ENCODE measurements at regions of chr6 and their contacts with region 1.

Region 1: DNA sequence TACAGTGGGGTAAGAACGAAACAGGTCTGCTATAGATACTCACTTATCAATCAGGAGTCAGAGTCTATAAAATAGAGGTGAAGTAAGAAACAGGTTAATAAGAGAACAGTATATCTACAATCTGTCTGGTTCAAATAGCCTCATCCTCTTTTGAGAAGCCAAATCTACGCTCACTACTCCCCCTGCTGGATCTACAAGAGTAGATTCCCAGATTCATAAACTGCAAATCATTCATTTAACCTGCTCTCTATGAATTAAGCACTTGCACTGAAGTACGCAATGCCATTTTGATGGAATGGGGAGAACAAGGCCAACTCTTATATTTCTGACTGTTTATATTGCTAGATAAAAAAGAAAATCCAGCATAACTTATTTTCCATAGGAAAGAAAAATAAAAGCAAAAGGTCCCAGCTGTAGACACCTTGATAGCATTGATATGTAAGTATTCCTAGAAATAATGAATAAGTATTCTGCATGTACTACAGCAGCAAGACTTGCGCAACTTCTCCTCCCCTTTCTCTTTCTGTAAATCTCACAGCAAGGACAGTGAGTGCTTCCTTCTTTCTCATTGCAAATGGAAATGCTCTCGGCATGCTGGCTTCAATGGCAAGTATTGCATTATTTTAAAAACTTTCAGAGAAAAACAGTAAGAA is 92.3 kb downstream of the RFX6 start:
- DNase-seq: peak; percentile 64
- ATAC-seq: peak; percentile 89
- H3K4me3 ChIP-seq: no peak overlapping the region
- H3K27ac ChIP-seq: no peak overlapping the region
- H3K4me1 ChIP-seq: no peaks in the 10 kb centered on the region
- H3K27me3 ChIP-seq: no peaks in the 10 kb centered on the region
- CTCF ChIP-seq: peak; percentile 84
- EP300 ChIP-seq: no peak
- POLR2A ChIP-seq: no peak
- RAD21 ChIP-seq: peak; percentile 61

Region 2: DNA sequence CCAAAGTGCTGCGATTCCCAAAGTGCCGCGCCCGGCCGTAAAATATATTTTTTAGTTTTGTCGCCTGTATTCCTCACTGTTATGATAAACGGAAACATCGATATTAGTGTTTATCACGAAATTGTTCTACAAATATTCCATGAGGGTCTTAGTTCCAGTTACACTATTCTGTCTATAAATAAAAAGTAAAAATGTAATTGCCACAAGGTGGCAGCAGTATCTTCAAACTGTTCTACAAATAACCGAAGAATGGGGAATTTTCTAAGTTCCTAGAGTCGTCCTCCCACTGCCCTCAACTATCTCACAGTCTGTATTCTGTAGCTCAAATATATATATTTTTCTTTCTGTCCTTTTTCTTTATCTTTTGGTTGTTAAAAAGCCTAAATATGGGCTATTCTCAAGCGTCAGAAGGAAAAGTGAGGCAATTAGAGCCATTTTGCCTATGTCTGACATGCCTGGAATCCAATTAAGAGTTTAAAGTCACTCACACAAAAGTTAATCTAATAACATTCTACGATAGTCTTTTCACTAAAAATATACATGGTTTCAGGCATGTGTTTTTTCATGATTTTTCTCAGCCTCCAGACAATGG is 189.7 kb before region 1 on chr6:
- CTCF ChIA-PET with region 1: interaction called, 8 read pairs
- POLR2A ChIA-PET with region 1: no interaction called
- in situ Hi-C with region 1: no loop called
- intact Hi-C with region 1: loop called (anchors 1 kb)
- DNase-seq: peak; percentile 58
- ATAC-seq: peak; percentile 86
- H3K4me3 ChIP-seq: peak overlapping the region in 1 of 3 experiments; percentile 1; a peak in 1 of 6 replicates
- H3K27ac ChIP-seq: no peak overlapping the region
- H3K4me1 ChIP-seq: no peaks in the 10 kb centered on the region
- H3K27me3 ChIP-seq: no peaks in the 10 kb centered on the region; a peak in 1 of 5 replicates
- CTCF ChIP-seq: peak; percentile 72
- EP300 ChIP-seq: no peak
- POLR2A ChIP-seq: no peak
- RAD21 ChIP-seq: no peak

Region 3: DNA sequence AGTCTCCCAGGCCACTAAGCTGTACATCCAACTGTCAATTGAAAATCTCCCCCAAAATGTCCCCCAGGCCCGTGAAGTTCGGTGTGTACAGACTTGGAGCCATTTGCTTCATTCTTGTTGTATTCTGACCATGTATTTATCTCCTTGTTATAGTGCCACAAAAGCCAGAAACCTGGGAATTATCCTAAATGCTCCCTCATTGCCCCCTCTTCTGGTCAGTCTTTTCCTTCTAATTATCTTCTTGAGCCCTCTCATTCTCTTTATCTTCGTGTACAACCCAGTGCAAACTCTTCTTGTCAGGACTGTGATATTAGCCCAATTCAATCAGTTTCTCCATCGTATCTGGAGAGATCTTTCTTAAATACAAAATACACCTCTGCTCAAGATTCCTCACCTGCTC is 27.6 kb before region 1 on chr6:
- CTCF ChIA-PET with region 1: no interaction called
- POLR2A ChIA-PET with region 1: no interaction called
- in situ Hi-C with region 1: no loop called
- intact Hi-C with region 1: loop called (anchors 2 kb)
- DNase-seq: no peak
- ATAC-seq: peak; percentile 39; the same call in 2 of the 3 replicates
- H3K4me3 ChIP-seq: no peak overlapping the region
- H3K27ac ChIP-seq: no peak overlapping the region
- H3K4me1 ChIP-seq: peaks cover 17% of the 10 kb centered on the region
- H3K27me3 ChIP-seq: no peaks in the 10 kb centered on the region; a peak in 1 of 5 replicates
- CTCF ChIP-seq: 0 out of 2 replicates have a peak, but pooled peaks have one; percentile 12
- EP300 ChIP-seq: no peak
- POLR2A ChIP-seq: no peak
- RAD21 ChIP-seq: no peak

Region 4: DNA sequence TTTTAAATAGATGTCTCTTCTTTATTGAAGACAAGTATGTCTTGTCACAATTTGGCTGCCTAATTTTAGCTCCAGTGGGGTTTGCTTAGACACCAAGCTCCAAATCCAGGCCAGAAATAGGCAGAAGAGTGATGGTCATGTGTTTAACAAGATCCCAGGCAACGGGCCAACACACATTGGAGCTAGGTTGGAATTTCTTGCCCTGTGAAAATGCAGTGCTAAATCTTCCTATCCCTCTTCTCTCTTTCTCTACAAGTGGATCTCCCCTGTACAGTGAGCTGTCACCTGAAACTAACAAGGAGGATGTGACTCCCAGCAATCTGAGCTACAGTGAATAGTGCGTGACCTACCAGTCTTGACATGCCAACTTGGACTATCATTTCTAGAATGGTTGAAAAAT is 230.7 kb after region 1 on chr6:
- CTCF ChIA-PET with region 1: no interaction called
- POLR2A ChIA-PET with region 1: no interaction called
- in situ Hi-C with region 1: loop called (anchors 5 kb)
- intact Hi-C with region 1: no loop called
- DNase-seq: no peak
- ATAC-seq: no peak
- H3K4me3 ChIP-seq: no peak overlapping the region
- H3K27ac ChIP-seq: no peak overlapping the region
- H3K4me1 ChIP-seq: no peaks in the 10 kb centered on the region
- H3K27me3 ChIP-seq: no peaks in the 10 kb centered on the region
- CTCF ChIP-seq: no peak
- EP300 ChIP-seq: no peak
- POLR2A ChIP-seq: no peak
- RAD21 ChIP-seq: no peak

Region 5: DNA sequence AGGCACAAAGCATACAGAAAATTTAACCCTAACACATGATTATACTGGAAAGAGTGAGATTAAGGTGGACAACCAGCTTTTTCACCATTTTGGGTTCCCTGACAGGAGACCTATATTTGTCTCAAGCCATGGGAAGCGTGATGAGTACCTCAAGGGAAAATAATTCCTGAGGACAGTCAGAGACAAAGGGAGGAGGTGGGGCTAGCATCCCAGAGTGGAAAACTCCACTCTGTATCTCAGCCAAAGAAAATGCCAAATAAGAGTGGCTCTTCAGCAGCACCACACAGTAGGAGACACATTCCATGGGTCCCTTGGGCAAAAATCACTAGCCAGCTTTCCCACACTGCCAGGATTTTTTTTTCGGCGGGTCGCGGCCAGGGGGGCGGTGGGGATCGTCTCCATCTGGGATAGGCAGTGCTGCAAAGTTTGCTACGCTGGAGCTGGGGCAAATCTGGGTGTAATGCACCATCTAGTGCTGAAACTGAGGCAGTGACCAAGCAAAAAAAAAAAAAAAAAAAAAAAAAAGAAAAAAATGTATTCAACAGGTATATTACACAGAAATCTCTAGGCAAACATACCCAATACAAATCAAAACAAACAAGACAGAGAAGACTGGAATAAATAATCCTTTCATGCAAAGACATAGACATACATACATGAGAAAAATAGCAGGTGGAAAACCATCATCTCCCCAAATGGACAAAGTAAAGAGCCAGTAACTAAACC is 860.4 kb after region 1 on chr6:
- CTCF ChIA-PET with region 1: interaction called, 4 read pairs
- POLR2A ChIA-PET with region 1: no interaction called
- in situ Hi-C with region 1: no loop called
- intact Hi-C with region 1: loop called (anchors 2 kb)
- DNase-seq: peak; percentile 44
- ATAC-seq: peak; percentile 95
- H3K4me3 ChIP-seq: no peak overlapping the region; a peak in 1 of 6 replicates
- H3K27ac ChIP-seq: no peak overlapping the region
- H3K4me1 ChIP-seq: no peaks in the 10 kb centered on the region
- H3K27me3 ChIP-seq: no peaks in the 10 kb centered on the region
- CTCF ChIP-seq: peak; percentile 58
- EP300 ChIP-seq: no peak
- POLR2A ChIP-seq: no peak
- RAD21 ChIP-seq: no peak

Measured in HepG2 (cell line).